Breast epithelium (tissue), 4 donors: ENCODE measurements at regions of chr7 and their contacts with region 1.

Region 1: GRCh38 chr7:2241580-2242540 is at the starts of genes MRM2 and NUDT1:
- DNase-seq: peak; percentile 70 to 80
- H3K4me3 ChIP-seq: peak within 1 kb of the TSS; percentile 83 to 89 (median 83)
- H3K27ac ChIP-seq: peak within 1 kb of the TSS; percentile 50 to 57
- H3K4me1 ChIP-seq: peaks cover 0 to 12% of the 10 kb centered on the region in 2 donors
- H3K27me3 ChIP-seq: no peaks in the 10 kb centered on the region
- CTCF ChIP-seq: no peak
- POLR2A ChIP-seq: no peak
- total RNA-seq, gene MRM2: 10.9 to 20.2 (median 18.0) TPM
- total RNA-seq, gene NUDT1: 13.3 to 28.5 (median 18.0) TPM

Region 2: DNA sequence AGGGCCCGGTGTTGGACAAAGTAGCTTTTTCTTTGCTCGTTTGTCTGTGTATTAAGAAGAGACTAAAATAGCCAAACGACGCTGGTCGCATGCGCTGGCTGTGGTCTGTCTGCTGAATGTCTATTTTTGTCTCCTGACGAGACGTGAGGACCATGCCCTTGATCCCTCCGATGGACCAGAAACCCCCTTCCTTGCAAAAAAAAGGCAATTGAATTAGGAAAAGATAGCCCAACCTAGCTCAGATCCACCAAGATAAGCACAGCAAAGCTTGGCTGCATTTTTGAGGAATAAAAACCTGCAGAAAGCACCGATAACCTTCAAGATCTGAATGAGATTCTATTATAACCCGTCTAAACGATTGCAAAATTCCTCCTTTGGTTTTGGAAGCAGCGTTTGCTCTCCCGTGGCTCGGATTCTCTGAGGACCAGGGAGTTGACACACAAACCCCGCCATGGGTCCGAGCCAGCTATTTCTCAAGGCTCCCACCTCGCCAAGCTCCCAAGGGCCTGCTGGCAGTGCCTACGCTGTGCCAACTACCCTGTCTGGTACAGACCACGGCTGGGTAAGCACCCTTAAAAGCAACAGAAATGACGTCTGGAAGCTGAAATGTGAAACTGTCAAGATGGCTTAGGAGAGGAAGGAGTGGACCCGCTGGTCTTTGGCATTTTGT is 372.2 kb after region 1 on chr7:
- intact Hi-C with region 1: loop called (anchors 10 kb)
- DNase-seq: peak in 1 of 2 donors; percentile 74
- H3K4me3 ChIP-seq: peak overlapping the region; percentile 7 to 52 (median 28)
- H3K27ac ChIP-seq: peak overlapping the region; percentile 56 to 68
- H3K4me1 ChIP-seq: peaks cover 10 to 22% of the 10 kb centered on the region in 2 donors
- H3K27me3 ChIP-seq: no peaks in the 10 kb centered on the region
- CTCF ChIP-seq: no peak
- POLR2A ChIP-seq: no peak